Mammary epithelial cell (primary cell): ENCODE measurements at regions of chr19 and their contacts with region 1.

Region 1: GRCh38 chr19:55632463-55632834 is 8.1 kb upstream of the ZNF784 start:
- DNase-seq: peak; percentile 84
- H3K4me3 ChIP-seq: no peak overlapping the region
- H3K27ac ChIP-seq: no peak overlapping the region
- H3K4me1 ChIP-seq: peaks cover 14% of the 10 kb centered on the region
- H3K27me3 ChIP-seq: no peaks in the 10 kb centered on the region
- CTCF ChIP-seq: peak; percentile 77 to 79

Region 2: DNA sequence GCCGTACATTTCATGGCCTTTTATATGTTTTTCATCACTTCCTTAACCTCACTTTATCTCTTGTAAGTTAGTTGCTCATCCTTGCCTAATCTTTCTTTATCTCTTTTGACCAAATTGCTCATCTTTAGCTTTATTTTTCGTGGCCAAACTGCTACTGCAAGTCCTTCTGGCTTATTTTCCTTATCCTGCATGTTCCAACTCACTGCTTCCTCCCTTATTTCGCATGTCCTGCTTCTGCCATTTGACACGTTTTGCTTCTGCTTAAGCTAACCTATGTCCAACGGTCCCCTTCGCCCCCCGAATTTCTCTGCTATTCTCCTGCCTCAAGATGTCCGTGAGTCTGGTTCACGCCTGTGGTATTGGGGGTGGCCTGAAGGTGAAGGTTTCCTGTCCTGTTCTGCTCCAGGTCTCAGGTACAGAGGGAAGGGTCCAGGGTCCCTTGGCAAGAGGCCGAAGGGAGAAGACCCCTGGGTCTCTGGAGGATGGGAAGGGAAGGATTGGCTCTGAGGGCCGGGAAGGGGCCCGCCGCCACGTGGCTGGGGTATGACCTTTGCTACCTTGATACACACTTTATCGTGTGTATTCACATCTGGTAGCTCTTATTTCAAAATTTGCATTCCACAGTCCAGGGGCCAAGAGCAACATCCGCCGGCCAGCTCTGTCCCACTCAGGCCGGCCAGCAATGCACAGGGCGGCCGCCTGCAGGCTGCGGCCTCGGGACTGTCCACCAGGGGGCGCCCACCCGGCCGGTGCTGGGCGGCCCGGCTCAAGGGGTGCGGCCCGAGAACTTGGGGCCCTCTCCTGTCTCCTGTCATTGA is 165.0 kb before region 1 on chr19:
- CTCF ChIA-PET with region 1: interaction called, 8 read pairs
- dilution Hi-C with region 1: no loop called
- in situ Hi-C with region 1: no loop called
- intact Hi-C with region 1: loop called (anchors 1 kb)
- DNase-seq: peak; percentile 38
- H3K4me3 ChIP-seq: no peak overlapping the region
- H3K27ac ChIP-seq: no peak overlapping the region
- H3K4me1 ChIP-seq: no peaks in the 10 kb centered on the region
- H3K27me3 ChIP-seq: no peaks in the 10 kb centered on the region
- CTCF ChIP-seq: peak; percentile 77 to 97

Region 3: DNA sequence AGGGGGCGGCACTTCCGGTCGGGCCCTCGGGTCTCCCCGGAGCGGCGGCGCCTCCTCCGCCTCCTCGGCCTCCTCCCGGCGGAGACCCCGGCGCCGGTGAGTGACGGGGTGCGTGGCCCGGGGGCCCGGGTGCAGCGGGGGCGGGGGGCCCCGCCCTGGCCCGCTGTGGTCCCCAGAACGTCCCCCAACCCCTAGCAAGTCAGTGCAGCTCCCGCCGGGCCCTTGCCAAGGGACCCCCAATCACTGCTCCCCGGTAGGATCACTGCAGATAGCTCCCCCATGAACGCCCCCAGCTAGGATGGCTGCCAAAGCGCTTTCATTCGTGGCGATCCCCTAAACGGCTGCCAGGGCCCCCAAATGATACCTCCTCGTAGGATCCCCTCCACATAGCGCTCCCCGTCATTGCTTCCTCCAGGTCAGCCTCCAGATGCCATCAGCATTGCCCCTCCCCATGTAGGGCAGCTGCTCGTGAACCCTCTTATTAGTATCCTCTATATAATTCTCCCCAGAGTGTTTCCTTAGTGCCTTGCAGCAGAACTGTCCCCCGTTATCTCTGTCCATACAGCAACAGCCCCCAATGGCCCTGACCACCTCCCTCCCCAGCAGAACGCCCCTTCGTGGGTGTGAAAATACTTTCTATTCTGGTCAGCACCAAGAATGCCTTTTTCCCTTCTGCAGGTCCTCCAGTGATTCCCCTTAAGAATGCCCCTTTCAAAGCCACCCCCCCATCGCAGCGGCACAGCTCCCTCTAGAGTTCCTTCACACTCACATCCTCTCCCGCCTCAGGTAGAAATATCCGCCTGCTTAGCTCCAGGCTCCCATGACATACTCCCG is 26.6 kb before region 1 on chr19 and contains the start of gene ZNF865:
- CTCF ChIA-PET with region 1: interaction called, 4 read pairs
- dilution Hi-C with region 1: loop called (anchors 5 kb)
- in situ Hi-C with region 1: no loop called
- intact Hi-C with region 1: loop called (anchors 1 kb)
- DNase-seq: peak; percentile 84
- H3K4me3 ChIP-seq: peak within 1 kb of the TSS; percentile 77 to 80 (median 80)
- H3K27ac ChIP-seq: peak within 1 kb of the TSS; percentile 69
- H3K4me1 ChIP-seq: peaks cover 17% of the 10 kb centered on the region
- H3K27me3 ChIP-seq: no peaks in the 10 kb centered on the region
- CTCF ChIP-seq: peak; percentile 72 to 88
- total RNA-seq, gene ZNF865: 1.5 to 8.8 TPM

Region 4: GRCh38 chr19:55653758-55654539 is 21.5 kb after region 1 on chr19:
- CTCF ChIA-PET with region 1: no interaction called
- dilution Hi-C with region 1: no loop called
- in situ Hi-C with region 1: no loop called
- intact Hi-C with region 1: loop called (anchors 1 kb)
- DNase-seq: peak; percentile 98
- H3K4me3 ChIP-seq: peak overlapping the region; percentile 46 to 67 (median 60)
- H3K27ac ChIP-seq: peak overlapping the region; percentile 90
- H3K4me1 ChIP-seq: peaks cover 17% of the 10 kb centered on the region
- H3K27me3 ChIP-seq: no peaks in the 10 kb centered on the region
- CTCF ChIP-seq: peak; percentile 99 to 100

Region 5: GRCh38 chr19:56080669-56081401 is 448.4 kb after region 1 on chr19:
- CTCF ChIA-PET with region 1: no interaction called
- dilution Hi-C with region 1: no loop called
- in situ Hi-C with region 1: no loop called
- intact Hi-C with region 1: loop called (anchors 5 kb)
- DNase-seq: peak; percentile 57
- H3K4me3 ChIP-seq: peak overlapping the region in 2 of 3 experiments; percentile 32 to 49
- H3K27ac ChIP-seq: no peak overlapping the region
- H3K4me1 ChIP-seq: peaks cover 23% of the 10 kb centered on the region
- H3K27me3 ChIP-seq: no peaks in the 10 kb centered on the region
- CTCF ChIP-seq: peak; percentile 50 to 65

Region 6: DNA sequence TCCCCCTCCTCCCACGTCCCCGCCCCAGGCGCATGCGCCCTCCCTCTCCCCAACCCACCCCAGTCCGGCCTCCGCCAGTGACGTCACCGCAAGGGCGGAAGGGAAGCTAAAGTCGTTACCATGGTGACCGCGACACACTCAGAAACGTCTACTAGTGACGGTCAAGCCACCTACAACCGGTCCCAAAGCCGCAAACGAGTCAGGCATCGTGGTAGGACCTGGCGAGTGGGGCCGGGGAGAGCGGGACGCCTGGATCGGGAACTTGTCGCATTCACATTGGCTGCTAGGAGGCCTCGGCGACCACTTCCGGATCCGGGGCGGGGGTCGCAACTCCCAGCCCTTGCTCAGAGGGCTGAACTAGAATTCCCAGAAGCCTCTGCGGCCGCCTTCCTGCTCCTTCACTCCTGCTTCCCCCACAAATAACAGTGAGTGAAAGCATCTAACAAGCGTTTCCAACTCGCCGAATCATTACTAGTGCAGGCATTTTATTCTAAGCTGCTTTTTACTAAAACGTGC is 682.2 kb after region 1 on chr19 and contains the start of gene ZSCAN5A:
- CTCF ChIA-PET with region 1: no interaction called
- dilution Hi-C with region 1: no loop called
- in situ Hi-C with region 1: no loop called
- intact Hi-C with region 1: loop called (anchors 10 kb)
- DNase-seq: peak; percentile 95
- H3K4me3 ChIP-seq: peak within 1 kb of the TSS; percentile 66 to 91 (median 80)
- H3K27ac ChIP-seq: peak within 1 kb of the TSS; percentile 95
- H3K4me1 ChIP-seq: peaks cover 6% of the 10 kb centered on the region
- H3K27me3 ChIP-seq: no peaks in the 10 kb centered on the region
- CTCF ChIP-seq: no peak
- total RNA-seq, gene ZSCAN5A: 5.5 to 7.4 TPM